Psoas muscle (tissue), 8 donors: ENCODE measurements at regions of chr19 and their contacts with region 1.

Region 1: DNA sequence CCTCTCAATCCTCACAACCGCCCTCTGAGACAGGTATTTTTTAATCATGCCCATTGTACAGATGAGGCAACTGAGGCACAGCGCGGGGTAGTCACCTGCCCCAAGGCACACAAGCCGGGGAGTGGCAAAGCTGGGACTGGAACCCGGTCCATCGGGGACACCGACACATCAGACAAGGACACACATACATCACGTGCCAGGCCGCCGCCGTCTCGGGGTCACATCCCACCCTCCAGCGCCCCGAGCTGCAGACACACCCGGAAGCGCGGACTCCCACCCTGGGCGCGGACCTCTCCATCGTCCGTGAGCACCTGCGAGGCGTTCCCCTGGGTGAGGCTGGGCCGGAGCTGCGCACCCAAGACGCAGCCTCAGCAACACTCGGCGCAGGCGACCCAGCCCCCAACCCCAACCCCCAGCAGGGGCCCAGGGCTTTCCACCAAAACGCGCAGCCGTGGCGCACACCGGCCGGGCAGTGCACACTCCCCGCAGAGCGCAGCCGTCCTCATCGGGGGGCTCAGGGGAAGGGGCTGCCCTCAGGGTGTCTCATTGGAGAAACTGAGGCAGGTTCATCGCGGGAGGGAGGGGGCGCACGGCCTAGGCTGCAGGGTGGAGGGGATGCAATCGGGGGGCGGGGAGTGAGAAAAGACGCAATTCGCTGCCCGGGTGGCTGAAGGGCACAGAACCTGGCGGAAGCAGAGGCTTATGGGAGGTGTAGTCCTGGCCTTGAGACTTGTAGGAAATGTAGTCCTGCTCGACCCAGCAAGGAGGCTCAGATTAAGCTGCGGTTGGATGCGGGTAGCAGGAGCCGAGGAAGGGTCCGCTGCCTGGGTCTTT is 1.9 kb upstream of the LMTK3 start:
- DNase-seq: peak in 1 of 2 donors; percentile 75
- ATAC-seq: peak; percentile 69 to 87 (median 78)
- H3K4me3 ChIP-seq: peak overlapping the region; percentile 73
- H3K27ac ChIP-seq: no peak overlapping the region
- H3K4me1 ChIP-seq: no peaks in the 10 kb centered on the region
- H3K27me3 ChIP-seq: peaks cover 0 to 28% (median 4%) of the 10 kb centered on the region in 3 donors
- CTCF ChIP-seq: no peak

Region 2: GRCh38 chr19:48568345-48568886 is 54.9 kb after region 1 on chr19:
- intact Hi-C with region 1: loop called in 1 of 2 experiments (anchors 5 kb)
- DNase-seq: peak; percentile 93 to 95
- ATAC-seq: peak; percentile 91 to 94 (median 94)
- H3K4me3 ChIP-seq: no peak overlapping the region
- H3K27ac ChIP-seq: peak overlapping the region; percentile 88
- H3K4me1 ChIP-seq: peaks cover 19% of the 10 kb centered on the region
- H3K27me3 ChIP-seq: no peaks in the 10 kb centered on the region
- CTCF ChIP-seq: no peak

Region 3: GRCh38 chr19:48582168-48582567 is 68.7 kb after region 1 on chr19:
- intact Hi-C with region 1: loop called (anchors 5 kb)
- DNase-seq: no peak
- ATAC-seq: no peak
- H3K4me3 ChIP-seq: no peak overlapping the region
- H3K27ac ChIP-seq: no peak overlapping the region
- H3K4me1 ChIP-seq: peaks cover 5% of the 10 kb centered on the region
- H3K27me3 ChIP-seq: no peaks in the 10 kb centered on the region
- CTCF ChIP-seq: no peak